CD4-positive, alpha-beta memory T cell (primary cell): ENCODE measurements at regions of chr10 and their contacts with region 1.

Region 1: GRCh38 chr10:119207367-119207668 is at the start of gene GRK5:
- DNase-seq: peak; percentile 98 to 99 (median 98)
- H3K4me3 ChIP-seq: peak within 1 kb of the TSS; percentile 37 to 84
- H3K4me3 Mint-ChIP-seq: peak within 1 kb of the TSS; percentile 94 to 99 (median 96)
- H3K27ac ChIP-seq: peak within 1 kb of the TSS; percentile 84
- H3K27ac Mint-ChIP-seq: peak within 1 kb of the TSS; percentile 96 to 99 (median 97)
- H3K4me1 ChIP-seq: peaks cover 52% of the 10 kb centered on the region
- H3K4me1 Mint-ChIP-seq: peaks cover 33 to 53% (median 43%) of the 10 kb centered on the region in 4 donors
- H3K27me3 ChIP-seq: no peaks in the 10 kb centered on the region
- H3K27me3 Mint-ChIP-seq: no peaks in the 10 kb centered on the region
- total RNA-seq, gene GRK5: 26.7 to 27.9 TPM

Region 2: DNA sequence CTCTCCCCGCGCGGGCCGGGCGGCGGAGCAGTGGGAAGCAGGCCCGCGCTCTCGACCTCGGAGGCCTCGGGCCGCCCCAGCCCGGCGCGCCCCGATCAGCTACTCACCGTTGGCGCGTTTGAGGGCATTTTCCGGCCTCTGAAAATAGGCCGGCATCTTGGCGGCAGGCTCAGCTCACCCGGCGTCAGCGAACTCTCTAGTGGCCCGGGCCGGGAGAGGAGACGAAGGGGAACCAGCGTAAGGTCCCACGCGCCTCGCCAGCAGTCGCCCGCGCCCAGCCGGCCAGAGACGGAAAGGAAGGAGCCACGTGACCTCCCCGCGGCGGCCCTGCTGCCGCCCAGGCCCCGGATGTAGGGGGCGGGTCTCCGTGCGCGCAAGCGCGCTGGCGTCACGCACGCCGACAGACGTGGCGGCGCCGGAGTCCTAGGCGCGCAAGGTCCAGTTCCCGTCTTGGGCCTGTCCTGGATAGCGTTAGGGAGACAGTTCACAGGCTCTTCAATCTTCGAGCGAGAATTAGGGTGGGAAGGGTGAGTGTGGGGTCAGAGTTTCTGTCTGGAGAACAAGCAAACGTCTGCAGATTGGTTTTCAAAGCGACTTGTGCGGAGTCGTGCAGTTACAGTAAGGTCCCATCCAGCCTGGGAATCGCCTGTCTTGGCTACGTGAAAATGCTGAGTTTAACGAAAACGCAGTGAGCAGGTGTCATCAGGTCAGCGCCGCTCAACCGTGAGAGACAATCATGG is 126.6 kb before region 1 on chr10 and contains the start of gene EIF3A:
- CTCF ChIA-PET with region 1: no interaction called
- POLR2A ChIA-PET with region 1: no interaction called
- intact Hi-C with region 1: loop called (anchors 1 kb)
- DNase-seq: peak; percentile 88 to 94 (median 91)
- H3K4me3 ChIP-seq: peak within 1 kb of the TSS; percentile 93 to 99
- H3K4me3 Mint-ChIP-seq: peak within 1 kb of the TSS; percentile 97 to 99 (median 99)
- H3K27ac ChIP-seq: peak within 1 kb of the TSS; percentile 98
- H3K27ac Mint-ChIP-seq: peak within 1 kb of the TSS; percentile 97 to 99 (median 99)
- H3K4me1 ChIP-seq: peaks cover 44% of the 10 kb centered on the region
- H3K4me1 Mint-ChIP-seq: peaks cover 28 to 61% (median 39%) of the 10 kb centered on the region in 4 donors
- H3K27me3 ChIP-seq: no peaks in the 10 kb centered on the region
- H3K27me3 Mint-ChIP-seq: no peaks in the 10 kb centered on the region
- total RNA-seq, gene EIF3A: 122 to 129 TPM

Region 3: GRCh38 chr10:119095640-119096039 is 111.7 kb before region 1 on chr10:
- CTCF ChIA-PET with region 1: no interaction called
- POLR2A ChIA-PET with region 1: no interaction called
- intact Hi-C with region 1: no loop called
- DNase-seq: peak in 3 of 5 donors; percentile 32 to 60 (median 38)
- H3K4me3 ChIP-seq: no peak overlapping the region
- H3K4me3 Mint-ChIP-seq: peak overlapping the region in 5 of 8 donors; percentile 8 to 65 (median 38)
- H3K27ac ChIP-seq: no peak overlapping the region
- H3K27ac Mint-ChIP-seq: peak overlapping the region; percentile 54 to 94 (median 90)
- H3K4me1 ChIP-seq: peaks cover 62% of the 10 kb centered on the region
- H3K4me1 Mint-ChIP-seq: peaks cover 27 to 62% (median 41%) of the 10 kb centered on the region in 4 donors
- H3K27me3 ChIP-seq: no peaks in the 10 kb centered on the region
- H3K27me3 Mint-ChIP-seq: no peaks in the 10 kb centered on the region

Region 4: DNA sequence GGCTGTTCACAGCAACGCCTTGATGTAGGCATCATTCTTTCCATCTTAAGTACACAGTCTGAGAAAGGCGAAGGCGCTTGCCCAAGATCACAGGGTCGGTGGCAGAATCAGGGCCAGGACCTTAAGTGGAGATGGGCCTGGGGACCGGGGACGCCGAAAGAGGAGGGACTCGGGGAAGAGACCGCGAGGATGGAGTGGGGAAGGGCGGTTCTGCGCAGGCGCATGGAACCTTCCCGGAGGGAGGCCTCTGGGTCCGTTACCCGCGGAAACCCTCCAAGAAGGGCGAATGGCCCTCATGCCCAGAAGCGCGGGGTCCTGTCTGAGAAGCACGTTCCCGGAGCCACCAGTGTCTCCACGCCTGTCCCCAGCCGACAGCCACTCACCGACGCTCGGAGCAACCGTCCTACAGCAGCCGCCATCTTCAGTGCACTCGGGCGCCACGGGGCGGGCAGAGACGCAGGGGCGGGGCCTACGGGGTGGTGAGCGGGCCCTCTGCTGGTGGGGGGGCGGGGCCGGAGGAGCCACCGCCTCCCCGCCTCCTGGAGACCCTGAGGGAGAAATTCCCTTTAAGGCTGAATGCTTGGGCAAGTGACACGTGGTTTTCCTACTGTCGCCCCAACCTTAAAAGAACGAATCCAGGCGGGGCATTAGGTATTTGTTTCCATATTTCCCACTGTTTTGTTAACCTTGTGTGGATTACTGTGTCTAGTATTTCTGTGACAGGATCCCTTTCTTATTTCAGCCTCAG is 28.8 kb before region 1 on chr10 and contains the start of gene PRDX3:
- CTCF ChIA-PET with region 1: interaction called, 11 read pairs
- POLR2A ChIA-PET with region 1: interaction called, 4 read pairs
- intact Hi-C with region 1: loop called (anchors 1 kb)
- DNase-seq: peak; percentile 89 to 92 (median 89)
- H3K4me3 ChIP-seq: peak within 1 kb of the TSS; percentile 96 to 100
- H3K4me3 Mint-ChIP-seq: peak within 1 kb of the TSS; percentile 89 to 99 (median 96)
- H3K27ac ChIP-seq: peak within 1 kb of the TSS; percentile 81
- H3K27ac Mint-ChIP-seq: peak within 1 kb of the TSS; percentile 85 to 98 (median 96)
- H3K4me1 ChIP-seq: peaks cover 44% of the 10 kb centered on the region
- H3K4me1 Mint-ChIP-seq: peaks cover 16 to 51% (median 34%) of the 10 kb centered on the region in 4 donors
- H3K27me3 ChIP-seq: no peaks in the 10 kb centered on the region
- H3K27me3 Mint-ChIP-seq: no peaks in the 10 kb centered on the region
- total RNA-seq, gene PRDX3: 34.3 to 38.2 TPM

Region 5: DNA sequence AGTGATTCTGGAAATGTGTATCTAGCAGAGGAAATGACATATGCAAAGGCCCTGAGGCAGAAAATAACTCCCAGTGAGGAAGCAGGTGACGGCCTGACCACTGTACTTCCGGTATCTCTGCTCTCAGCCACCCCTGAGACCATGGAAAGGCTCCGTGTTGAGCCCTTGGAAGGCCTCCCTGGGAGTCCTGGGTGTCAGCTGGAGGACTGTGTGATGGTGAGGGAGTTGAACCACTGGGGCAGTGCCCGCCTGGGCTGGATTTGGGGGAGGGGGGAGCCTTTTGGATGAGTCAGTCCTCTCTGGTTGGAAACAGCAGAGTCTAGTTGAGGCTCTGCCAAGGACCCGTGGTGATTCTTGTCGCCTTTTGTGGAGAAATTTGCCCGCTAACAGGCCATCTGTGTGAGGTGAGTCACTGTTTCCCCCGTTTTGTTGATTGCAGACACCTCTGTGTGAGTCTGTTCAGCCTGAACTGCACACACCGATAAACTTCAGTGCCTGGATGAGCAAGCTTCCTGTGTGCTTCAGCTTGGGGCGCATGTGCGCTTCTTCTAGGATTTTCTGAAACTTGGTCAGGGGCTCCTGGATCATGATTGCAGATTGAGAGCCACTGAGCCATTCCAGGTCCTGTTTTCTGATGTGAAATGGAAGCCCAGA is 98.7 kb after region 1 on chr10:
- CTCF ChIA-PET with region 1: interaction called, 139 read pairs
- POLR2A ChIA-PET with region 1: interaction called, 101 read pairs
- intact Hi-C with region 1: loop called (anchors 1 kb)
- DNase-seq: peak; percentile 78 to 98 (median 81)
- H3K4me3 ChIP-seq: peak overlapping the region; percentile 66 to 70
- H3K4me3 Mint-ChIP-seq: peak overlapping the region; percentile 87 to 94 (median 90)
- H3K27ac ChIP-seq: peak overlapping the region; percentile 75
- H3K27ac Mint-ChIP-seq: peak overlapping the region; percentile 96 to 99 (median 98)
- H3K4me1 ChIP-seq: peaks cover 62% of the 10 kb centered on the region
- H3K4me1 Mint-ChIP-seq: peaks cover 46 to 76% (median 63%) of the 10 kb centered on the region in 4 donors
- H3K27me3 ChIP-seq: no peaks in the 10 kb centered on the region
- H3K27me3 Mint-ChIP-seq: peaks cover 0 to 6% of the 10 kb centered on the region in 2 donors

Region 6: DNA sequence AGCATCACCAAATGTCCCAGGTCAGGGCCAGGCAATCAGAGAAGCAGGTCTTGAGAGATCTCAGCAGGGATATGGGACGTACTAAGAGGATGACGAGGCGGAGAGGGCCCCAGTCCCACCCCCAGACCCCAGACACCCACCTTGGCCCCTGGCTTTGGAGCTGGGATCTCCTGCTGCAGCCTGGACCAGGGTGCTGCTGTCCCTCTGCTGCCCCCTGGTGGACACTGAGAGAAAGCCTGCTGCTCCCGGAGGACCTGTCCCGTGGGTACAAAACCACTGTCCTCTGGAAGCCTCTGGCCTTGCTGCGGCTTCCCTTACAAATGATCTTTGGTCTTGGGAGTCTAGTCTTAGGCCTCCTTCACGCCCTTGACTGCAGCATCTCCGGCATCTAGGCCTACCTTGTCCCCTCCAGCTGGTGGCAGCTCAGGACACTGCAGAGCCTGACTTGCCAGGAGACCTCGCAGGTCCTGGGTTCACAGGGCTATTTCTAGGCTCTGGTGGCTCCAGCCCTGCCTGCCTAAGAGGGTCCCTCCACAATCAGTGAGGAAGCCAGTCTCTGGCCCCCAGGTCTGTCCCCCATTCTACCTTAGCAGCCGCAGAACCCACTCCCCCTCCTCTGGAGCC is 238.1 kb after region 1 on chr10:
- CTCF ChIA-PET with region 1: interaction called, 18 read pairs
- POLR2A ChIA-PET with region 1: interaction called, 8 read pairs
- intact Hi-C with region 1: loop called (anchors 1 kb)
- DNase-seq: peak; percentile 72 to 79 (median 76)
- H3K4me3 ChIP-seq: no peak overlapping the region
- H3K4me3 Mint-ChIP-seq: peak overlapping the region in 1 of 8 donors; percentile 22
- H3K27ac ChIP-seq: no peak overlapping the region
- H3K27ac Mint-ChIP-seq: peak overlapping the region in 3 of 7 donors; percentile 43 to 65 (median 48)
- H3K4me1 ChIP-seq: peaks cover 6% of the 10 kb centered on the region
- H3K4me1 Mint-ChIP-seq: peaks cover 1 to 13% (median 8%) of the 10 kb centered on the region in 4 donors
- H3K27me3 ChIP-seq: no peaks in the 10 kb centered on the region
- H3K27me3 Mint-ChIP-seq: no peaks in the 10 kb centered on the region

Region 7: GRCh38 chr10:119596537-119597404 is 389.5 kb after region 1 on chr10 and contains the start of gene TIAL1:
- CTCF ChIA-PET with region 1: no interaction called
- POLR2A ChIA-PET with region 1: interaction called, 7 read pairs
- intact Hi-C with region 1: loop called (anchors 1 kb)
- DNase-seq: peak; percentile 89 to 97 (median 91)
- H3K4me3 ChIP-seq: peak within 1 kb of the TSS; percentile 83 to 99
- H3K4me3 Mint-ChIP-seq: peak within 1 kb of the TSS; percentile 93 to 100 (median 99)
- H3K27ac ChIP-seq: peak within 1 kb of the TSS; percentile 98
- H3K27ac Mint-ChIP-seq: peak within 1 kb of the TSS; percentile 97 to 100 (median 99)
- H3K4me1 ChIP-seq: peaks cover 43% of the 10 kb centered on the region
- H3K4me1 Mint-ChIP-seq: peaks cover 37 to 57% (median 44%) of the 10 kb centered on the region in 4 donors
- H3K27me3 ChIP-seq: no peaks in the 10 kb centered on the region
- H3K27me3 Mint-ChIP-seq: no peaks in the 10 kb centered on the region
- total RNA-seq, gene TIAL1: 201 to 212 TPM

Region 8: GRCh38 chr10:119725828-119726675 is 518.7 kb after region 1 on chr10 and contains the start of gene INPP5F:
- CTCF ChIA-PET with region 1: no interaction called
- POLR2A ChIA-PET with region 1: interaction called, 3 read pairs
- intact Hi-C with region 1: loop called (anchors 2 kb)
- DNase-seq: peak; percentile 96 to 98 (median 97)
- H3K4me3 ChIP-seq: peak within 1 kb of the TSS; percentile 62 to 74
- H3K4me3 Mint-ChIP-seq: peak within 1 kb of the TSS; percentile 90 to 96 (median 92)
- H3K27ac ChIP-seq: peak within 1 kb of the TSS; percentile 53
- H3K27ac Mint-ChIP-seq: peak within 1 kb of the TSS; percentile 74 to 92 (median 91)
- H3K4me1 ChIP-seq: peaks cover 34% of the 10 kb centered on the region
- H3K4me1 Mint-ChIP-seq: peaks cover 27 to 37% (median 31%) of the 10 kb centered on the region in 4 donors
- H3K27me3 ChIP-seq: no peaks in the 10 kb centered on the region
- H3K27me3 Mint-ChIP-seq: no peaks in the 10 kb centered on the region
- total RNA-seq, gene INPP5F: 10.6 to 10.9 TPM